Tibial artery (tissue), 4 donors: ENCODE measurements at regions of chr2 and their contacts with region 1.

Region 1: GRCh38 chr2:148218326-148219075 is 197.6 kb downstream of the MBD5 start:
- DNase-seq: no peak
- H3K4me3 ChIP-seq: no peak overlapping the region
- H3K27ac ChIP-seq: no peak overlapping the region
- H3K4me1 ChIP-seq: peaks cover 0 to 9% (median 0%) of the 10 kb centered on the region in 4 donors
- H3K27me3 ChIP-seq: no peaks in the 10 kb centered on the region
- CTCF ChIP-seq: no peak

Region 2: GRCh38 chr2:148634749-148635148 is 416.2 kb after region 1 on chr2:
- intact Hi-C with region 1: loop called (anchors 5 kb)
- DNase-seq: no peak
- H3K4me3 ChIP-seq: no peak overlapping the region
- H3K27ac ChIP-seq: no peak overlapping the region
- H3K4me1 ChIP-seq: peaks cover 0 to 4% (median 0%) of the 10 kb centered on the region in 4 donors
- H3K27me3 ChIP-seq: no peaks in the 10 kb centered on the region
- CTCF ChIP-seq: no peak